ENCODE measurements at regions of chr12 and their contacts with region 1.

Region 1: GRCh38 chr12:94603434-94604365 is 46.7 kb downstream of the TMCC3 start:
- DNase-seq: peak; percentile 59
- H3K4me3 Mint-ChIP-seq: no peak overlapping the region
- H3K27ac Mint-ChIP-seq: no peak overlapping the region
- H3K4me1 Mint-ChIP-seq: no peaks in the 10 kb centered on the region
- H3K27me3 Mint-ChIP-seq: no peaks in the 10 kb centered on the region
- CTCF ChIP-seq: peak; percentile 81

Region 2: DNA sequence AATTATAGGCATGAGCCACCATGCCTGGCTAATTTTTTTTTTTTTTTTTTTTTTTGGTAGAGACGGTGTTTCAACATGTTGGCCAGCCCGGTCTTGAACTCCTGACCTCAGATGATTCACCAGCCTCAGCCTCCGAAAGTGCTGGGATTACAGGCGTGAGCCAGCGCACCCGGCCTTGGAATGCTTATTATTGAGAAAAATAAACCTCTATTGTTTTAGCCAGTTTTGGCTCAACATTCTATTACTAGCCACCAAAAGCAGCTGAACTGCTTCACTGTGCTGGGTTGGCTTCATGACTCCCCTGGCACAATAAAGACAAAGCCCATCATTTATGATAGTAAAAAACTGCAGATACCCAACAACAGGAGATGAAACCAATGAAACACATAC is 50.6 kb before region 1 on chr12:
- CTCF ChIA-PET with region 1: interaction called, 3 read pairs
- POLR2A ChIA-PET with region 1: no interaction called
- intact Hi-C with region 1: loop called (anchors 5 kb)
- DNase-seq: peak; percentile 87
- H3K4me3 Mint-ChIP-seq: no peak overlapping the region
- H3K27ac Mint-ChIP-seq: peak overlapping the region; percentile 46
- H3K4me1 Mint-ChIP-seq: peaks cover 18% of the 10 kb centered on the region
- H3K27me3 Mint-ChIP-seq: no peaks in the 10 kb centered on the region
- CTCF ChIP-seq: no peak

Region 3: GRCh38 chr12:94649349-94650142 is 45.8 kb after region 1 on chr12:
- CTCF ChIA-PET with region 1: interaction called, 4 read pairs
- POLR2A ChIA-PET with region 1: no interaction called
- intact Hi-C with region 1: loop called (anchors 1 kb)
- DNase-seq: peak; percentile 20
- H3K4me3 Mint-ChIP-seq: peak overlapping the region; percentile 74
- H3K27ac Mint-ChIP-seq: no peak overlapping the region
- H3K4me1 Mint-ChIP-seq: peaks cover 13% of the 10 kb centered on the region
- H3K27me3 Mint-ChIP-seq: no peaks in the 10 kb centered on the region
- CTCF ChIP-seq: peak; percentile 55

Region 4: GRCh38 chr12:94725375-94726168 is 121.9 kb after region 1 on chr12:
- CTCF ChIA-PET with region 1: interaction called, 4 read pairs
- POLR2A ChIA-PET with region 1: no interaction called
- intact Hi-C with region 1: loop called (anchors 1 kb)
- DNase-seq: peak; percentile 70
- H3K4me3 Mint-ChIP-seq: no peak overlapping the region
- H3K27ac Mint-ChIP-seq: no peak overlapping the region
- H3K4me1 Mint-ChIP-seq: no peaks in the 10 kb centered on the region
- H3K27me3 Mint-ChIP-seq: no peaks in the 10 kb centered on the region
- CTCF ChIP-seq: peak; percentile 49

Region 5: DNA sequence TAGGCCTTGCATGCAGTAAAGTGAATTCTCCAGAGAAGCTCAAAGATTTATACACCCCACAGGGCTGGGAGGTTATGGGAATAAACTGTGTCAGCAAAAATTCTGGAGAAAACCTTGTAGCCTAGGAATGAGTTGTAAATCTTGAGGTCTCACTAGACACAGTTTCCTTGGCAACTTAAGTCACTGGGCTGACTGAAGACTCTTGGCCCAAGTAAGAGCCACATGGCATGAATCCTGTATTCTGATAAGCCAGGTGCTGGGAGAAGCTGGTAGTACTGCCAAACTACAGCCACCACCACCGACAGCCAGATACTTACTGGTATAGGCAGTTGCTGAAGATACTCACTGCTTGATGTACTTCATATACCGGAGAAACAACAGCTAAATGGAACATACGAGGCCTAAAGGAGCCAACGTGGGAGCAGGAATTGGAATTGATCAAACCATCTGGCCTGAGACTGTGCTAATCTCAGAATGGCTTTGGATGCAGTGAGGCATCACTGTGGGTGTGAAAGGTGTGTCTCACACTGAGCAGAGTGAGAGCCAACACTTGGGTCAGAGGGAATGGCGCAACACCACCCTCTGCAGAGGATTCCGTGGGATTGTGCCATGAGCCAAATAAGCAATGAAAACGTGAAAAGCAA is 149.5 kb after region 1 on chr12:
- CTCF ChIA-PET with region 1: interaction called, 6 read pairs
- POLR2A ChIA-PET with region 1: no interaction called
- intact Hi-C with region 1: loop called (anchors 2 kb)
- DNase-seq: peak; percentile 70
- H3K4me3 Mint-ChIP-seq: no peak overlapping the region
- H3K27ac Mint-ChIP-seq: no peak overlapping the region
- H3K4me1 Mint-ChIP-seq: peaks cover 13% of the 10 kb centered on the region
- H3K27me3 Mint-ChIP-seq: no peaks in the 10 kb centered on the region
- CTCF ChIP-seq: no peak

Region 6: DNA sequence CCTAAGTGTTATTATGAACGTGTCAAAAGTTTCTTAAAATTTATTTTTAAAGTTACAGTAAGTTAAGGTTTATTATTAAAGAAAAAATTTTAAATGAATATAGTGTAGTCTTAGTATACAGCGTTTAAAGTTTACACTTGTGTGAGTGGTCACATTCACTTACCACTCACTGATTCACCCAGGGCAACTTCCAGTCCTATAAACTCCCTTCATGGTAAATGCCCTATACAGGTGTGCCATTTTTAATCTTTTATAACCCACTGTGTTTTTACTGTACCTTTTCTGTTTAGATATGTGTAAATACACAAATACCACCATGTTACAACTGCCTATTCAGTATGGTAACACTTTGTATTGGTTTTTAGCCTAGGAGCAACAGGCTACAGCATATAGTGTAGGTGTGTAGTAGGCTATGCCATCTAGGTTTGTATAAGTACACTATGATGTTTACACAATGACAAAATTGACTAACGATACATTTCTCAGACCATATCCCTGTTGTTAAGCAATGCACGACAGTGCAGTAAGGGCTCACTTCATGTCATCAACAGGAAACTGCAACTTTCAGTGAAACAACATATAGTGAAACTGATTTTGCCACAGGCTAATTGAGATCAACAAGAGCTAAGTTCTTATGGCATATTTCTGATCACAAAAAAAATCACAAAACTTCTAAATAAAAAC is 158.7 kb after region 1 on chr12:
- CTCF ChIA-PET with region 1: interaction called, 3 read pairs
- POLR2A ChIA-PET with region 1: no interaction called
- intact Hi-C with region 1: loop called (anchors 2 kb)
- DNase-seq: peak; percentile 50
- H3K4me3 Mint-ChIP-seq: no peak overlapping the region
- H3K27ac Mint-ChIP-seq: peak overlapping the region; percentile 92
- H3K4me1 Mint-ChIP-seq: peaks cover 7% of the 10 kb centered on the region
- H3K27me3 Mint-ChIP-seq: no peaks in the 10 kb centered on the region
- CTCF ChIP-seq: no peak

Region 7: GRCh38 chr12:94775710-94776109 is 172.0 kb after region 1 on chr12:
- CTCF ChIA-PET with region 1: no interaction called
- POLR2A ChIA-PET with region 1: no interaction called
- intact Hi-C with region 1: no loop called
- DNase-seq: no peak
- H3K4me3 Mint-ChIP-seq: no peak overlapping the region
- H3K27ac Mint-ChIP-seq: no peak overlapping the region
- H3K4me1 Mint-ChIP-seq: peaks cover 6% of the 10 kb centered on the region
- H3K27me3 Mint-ChIP-seq: peaks cover 39% of the 10 kb centered on the region
- CTCF ChIP-seq: no peak

Measured in MCF 10A (cell line).